Activated T-helper 2 cell treated with anti-CD3 and anti-CD28 coated beads, Interferon-gamma antibody, Interleukin-2, Interleukin-4, amounts not matched to agents 10 μg/mL and 5 μg/mL and 100 μg/mL, durations not matched to agents 14 hours and 24 hours and 36 hours (primary cell): ENCODE measurements at regions of chr19 and their contacts with region 1.

Region 1: GRCh38 chr19:48321622-48322591 is 3.4 kb upstream of the EMP3 start:
- DNase-seq: peak; percentile 100
- H3K4me3 Mint-ChIP-seq: peak overlapping the region; percentile 89
- H3K27ac Mint-ChIP-seq: peak overlapping the region; percentile 98
- H3K4me1 Mint-ChIP-seq: peaks cover 40% of the 10 kb centered on the region
- H3K27me3 Mint-ChIP-seq: no peaks in the 10 kb centered on the region

Region 2: DNA sequence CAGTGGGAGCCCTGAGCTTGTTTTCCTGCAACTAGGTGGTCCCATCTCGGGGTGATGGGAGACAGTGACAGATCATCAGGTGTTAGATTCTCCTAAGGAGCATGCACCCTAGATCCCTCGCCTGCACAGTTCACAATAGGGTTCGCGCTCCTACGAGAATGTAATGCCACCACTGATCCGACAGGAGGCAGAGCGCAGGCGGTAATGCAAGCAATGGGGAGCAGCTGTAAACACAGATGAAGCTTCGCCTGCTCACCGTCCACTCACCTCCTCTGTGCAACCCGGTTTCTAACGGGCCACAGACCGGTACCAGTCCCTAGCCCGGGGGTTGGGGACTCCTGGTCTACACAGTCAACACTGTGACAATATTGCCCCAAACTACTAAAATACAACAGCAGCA is 105.0 kb before region 1 on chr19:
- intact Hi-C with region 1: no loop called
- DNase-seq: no peak
- H3K4me3 Mint-ChIP-seq: no peak overlapping the region
- H3K27ac Mint-ChIP-seq: no peak overlapping the region
- H3K4me1 Mint-ChIP-seq: peaks cover 4% of the 10 kb centered on the region
- H3K27me3 Mint-ChIP-seq: no peaks in the 10 kb centered on the region

Region 3: GRCh38 chr19:48255376-48256303 is 66.3 kb before region 1 on chr19 and contains the start of gene CARD8:
- intact Hi-C with region 1: loop called (anchors 5 kb)
- DNase-seq: peak; percentile 81
- H3K4me3 Mint-ChIP-seq: peak within 1 kb of the TSS; percentile 98
- H3K27ac Mint-ChIP-seq: peak within 1 kb of the TSS; percentile 100
- H3K4me1 Mint-ChIP-seq: peaks cover 58% of the 10 kb centered on the region
- H3K27me3 Mint-ChIP-seq: no peaks in the 10 kb centered on the region
- total RNA-seq, gene CARD8: 108 and 110 TPM in 2 replicates

Region 4: GRCh38 chr19:48363810-48364563 is 42.1 kb after region 1 on chr19 and contains the starts of genes SYNGR4 and TMEM143:
- intact Hi-C with region 1: loop called (anchors 2 kb)
- DNase-seq: peak; percentile 99
- H3K4me3 Mint-ChIP-seq: peak within 1 kb of the TSS; percentile 78
- H3K27ac Mint-ChIP-seq: peak within 1 kb of the TSS; percentile 90
- H3K4me1 Mint-ChIP-seq: peaks cover 12% of the 10 kb centered on the region
- H3K27me3 Mint-ChIP-seq: no peaks in the 10 kb centered on the region
- total RNA-seq, gene SYNGR4: not detected in 2 replicates
- total RNA-seq, gene TMEM143: 12.8 and 13.1 TPM in 2 replicates

Region 5: GRCh38 chr19:48513289-48514122 is 191.6 kb after region 1 on chr19:
- intact Hi-C with region 1: loop called (anchors 5 kb)
- DNase-seq: peak; percentile 66
- H3K4me3 Mint-ChIP-seq: no peak overlapping the region
- H3K27ac Mint-ChIP-seq: peak overlapping the region; percentile 39
- H3K4me1 Mint-ChIP-seq: peaks cover 13% of the 10 kb centered on the region
- H3K27me3 Mint-ChIP-seq: no peaks in the 10 kb centered on the region

Region 6: DNA sequence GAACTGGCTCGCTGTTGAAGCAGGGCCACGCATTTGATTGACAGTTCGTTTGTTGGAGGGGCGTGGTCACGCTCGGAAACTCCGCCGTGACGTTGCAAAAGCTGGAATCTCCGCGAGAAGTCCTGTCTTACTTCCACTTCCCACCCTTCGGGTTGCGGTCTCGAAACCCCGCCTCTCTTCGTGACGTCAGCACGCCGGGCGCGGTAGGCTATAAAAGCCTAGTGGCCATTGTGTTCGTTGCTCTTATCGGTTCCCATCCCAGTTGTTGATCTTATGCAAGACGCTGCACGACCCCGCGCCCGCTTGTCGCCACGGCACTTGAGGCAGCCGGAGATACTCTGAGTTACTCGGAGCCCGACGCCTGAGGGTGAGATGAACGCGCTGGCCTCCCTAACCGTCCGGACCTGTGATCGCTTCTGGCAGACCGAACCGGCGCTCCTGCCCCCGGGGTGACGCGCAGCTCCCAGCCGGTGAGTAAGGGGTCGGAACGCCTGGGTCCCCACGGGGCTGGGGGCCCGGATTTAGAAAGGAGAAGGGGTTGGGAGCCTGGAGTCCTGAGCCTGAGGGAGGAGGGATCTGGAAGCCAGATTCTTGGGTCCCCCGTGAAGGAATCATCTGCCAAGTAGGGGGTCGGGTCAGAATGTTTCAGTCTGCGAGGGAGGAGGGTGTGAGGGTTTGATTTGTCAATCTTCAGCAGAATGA is 550.4 kb after region 1 on chr19 and contains the start of gene PPP1R15A:
- intact Hi-C with region 1: loop called (anchors 5 kb)
- DNase-seq: peak; percentile 98
- H3K4me3 Mint-ChIP-seq: peak within 1 kb of the TSS; percentile 94
- H3K27ac Mint-ChIP-seq: peak within 1 kb of the TSS; percentile 99
- H3K4me1 Mint-ChIP-seq: peaks cover 40% of the 10 kb centered on the region
- H3K27me3 Mint-ChIP-seq: peaks cover 4% of the 10 kb centered on the region
- total RNA-seq, gene PPP1R15A: 30.8 and 31.8 TPM in 2 replicates